Left cardiac atrium (tissue), 4 donors: ENCODE measurements at regions of chr2 and their contacts with region 1.

Region 1: DNA sequence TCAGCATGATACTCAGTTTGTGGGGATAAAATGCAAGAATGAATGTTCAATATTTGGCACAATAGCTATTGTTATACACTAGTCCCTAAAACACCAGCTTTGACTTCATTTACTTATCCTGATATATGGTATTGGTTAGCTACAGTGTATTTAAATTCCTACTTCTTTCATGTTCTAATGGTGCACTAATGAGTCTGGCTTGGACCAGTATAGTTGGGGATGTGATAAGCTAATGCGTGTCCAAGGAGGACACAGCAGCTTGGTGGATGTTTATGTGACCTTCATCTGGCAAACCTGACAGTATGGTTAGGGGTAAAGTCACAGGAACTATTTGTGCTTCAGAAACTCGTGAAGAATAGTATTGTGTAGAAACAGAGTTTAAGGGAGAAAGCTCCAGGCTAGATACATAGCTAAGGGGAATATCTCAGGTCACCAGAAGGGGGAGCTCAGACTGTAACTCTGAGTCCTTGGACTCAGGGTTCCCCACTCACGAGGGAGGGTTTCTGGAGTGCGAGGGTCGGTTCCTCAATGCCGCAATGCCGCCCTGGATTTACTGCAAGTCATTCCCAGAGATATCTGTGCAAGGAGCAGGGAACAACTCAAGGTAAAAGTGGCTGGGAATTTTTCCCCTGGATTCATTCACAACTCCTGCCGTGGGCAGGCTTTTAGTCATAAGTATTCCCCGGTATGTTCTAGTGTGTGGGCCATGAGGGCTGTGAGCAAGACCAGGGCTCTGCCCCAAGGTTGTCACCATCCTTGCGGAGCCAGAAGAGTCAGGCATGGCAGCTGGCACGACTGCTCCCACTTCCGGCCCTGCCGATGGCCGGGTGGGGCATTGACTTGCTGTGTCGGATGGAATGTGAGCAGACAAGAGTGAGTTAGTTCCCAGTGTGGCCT is 14.5 kb downstream of the IL1R2 start:
- DNase-seq: no peak
- ATAC-seq: peak; percentile 76 to 79

Region 2: DNA sequence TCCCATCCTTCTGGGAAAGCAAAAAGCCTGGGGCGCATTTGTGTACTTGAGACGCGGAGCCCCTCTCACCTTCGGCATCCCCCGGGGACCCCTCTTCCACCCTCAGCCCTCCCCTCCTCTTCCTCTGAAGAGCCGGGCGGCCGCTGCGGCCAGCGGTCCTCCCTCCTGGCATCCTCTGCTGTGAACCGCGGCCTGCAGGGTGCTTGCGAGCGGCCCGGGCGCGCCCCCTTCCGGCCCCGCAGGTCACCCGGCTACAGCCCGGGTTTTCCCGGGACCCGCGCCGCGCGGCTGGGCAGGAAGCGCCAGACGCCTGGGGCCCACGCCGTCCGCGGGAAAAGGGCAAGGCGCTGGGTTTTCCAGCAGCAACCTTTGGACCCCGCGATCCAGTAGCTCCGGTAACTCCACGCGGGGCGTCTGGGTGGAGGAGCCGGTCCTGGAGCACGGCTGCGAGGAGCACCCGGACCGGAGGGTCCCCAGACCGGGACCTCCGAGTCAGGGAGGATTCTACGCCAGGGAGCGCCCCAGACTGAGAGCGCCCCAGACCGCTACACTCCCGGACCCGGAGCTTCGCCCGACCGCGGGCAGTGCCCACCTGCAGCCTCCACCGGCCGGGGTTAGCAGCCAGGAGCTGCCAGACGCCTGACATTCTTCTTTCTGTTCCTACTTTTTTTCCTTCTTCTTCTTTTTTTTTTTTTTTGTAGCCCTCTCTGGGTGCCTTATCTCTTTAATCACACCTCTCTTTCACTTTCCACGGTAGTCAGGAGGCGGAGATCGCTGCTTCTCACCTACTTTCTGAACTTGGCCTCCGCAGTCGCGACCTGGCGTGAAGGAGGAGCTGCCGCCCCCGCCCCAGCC is 349.5 kb after region 1 on chr2 and contains the start of gene IL18R1:
- intact Hi-C with region 1: loop called in 1 of 2 experiments (anchors 10 kb)
- DNase-seq: peak; percentile 86
- ATAC-seq: peak; percentile 99
- total RNA-seq, gene IL18R1: 1.2 to 5.5 TPM

Region 3: GRCh38 chr2:102449370-102449974 is 443.2 kb after region 1 on chr2:
- intact Hi-C with region 1: loop called in 1 of 2 experiments (anchors 5 kb)
- DNase-seq: peak; percentile 32
- ATAC-seq: no peak